ENCODE measurements at regions of chr19 and their contacts with region 1.

Region 1: DNA sequence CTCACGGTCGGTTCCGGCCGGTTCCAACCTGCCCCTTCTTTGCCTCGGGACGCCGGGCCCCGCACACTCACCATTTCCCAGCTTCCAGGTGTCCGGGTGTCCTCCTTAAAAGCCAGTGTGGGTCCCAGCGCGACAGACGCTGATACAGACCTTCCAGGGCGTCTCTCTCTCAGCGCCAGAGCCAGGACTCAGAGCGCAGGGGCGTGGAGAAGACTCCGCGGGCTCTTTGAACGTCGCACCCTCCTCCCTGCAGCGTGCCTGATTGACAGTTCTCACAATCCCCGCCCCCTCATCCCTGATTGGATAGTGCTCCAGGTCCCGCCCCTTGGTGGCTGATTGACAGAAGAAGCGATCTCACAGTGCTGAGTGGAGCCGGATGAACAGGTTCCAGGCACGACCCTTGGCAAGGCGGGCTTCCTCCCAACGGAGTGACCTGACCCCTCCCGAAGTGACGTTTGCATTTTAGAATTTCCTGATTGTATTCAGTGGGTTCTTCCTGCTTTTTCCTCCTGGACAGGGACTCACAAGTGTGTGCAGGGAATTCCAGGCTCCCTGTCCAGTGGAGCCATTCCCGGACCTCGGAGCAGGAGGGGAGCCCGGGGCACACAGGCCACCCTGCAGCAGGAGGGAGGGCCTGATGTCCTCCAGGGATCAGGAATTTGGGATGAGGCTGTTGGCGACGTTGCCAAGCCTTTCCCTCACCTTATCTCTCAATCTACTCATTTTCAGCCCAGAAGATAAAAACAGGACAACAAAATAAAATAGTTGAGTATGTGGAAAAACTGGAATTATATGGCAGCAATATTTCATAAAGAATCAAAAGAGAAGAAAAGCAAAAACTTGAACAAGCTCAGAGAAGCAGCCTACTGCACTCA is at the start of gene ZNF823:
- DNase-seq: peak; percentile 99
- H3K4me3 Mint-ChIP-seq: peak within 1 kb of the TSS; percentile 100
- H3K27ac Mint-ChIP-seq: peak within 1 kb of the TSS; percentile 90
- H3K4me1 Mint-ChIP-seq: peaks cover 6% of the 10 kb centered on the region
- H3K27me3 Mint-ChIP-seq: no peaks in the 10 kb centered on the region
- CTCF ChIP-seq: no peak
- total RNA-seq, gene ZNF823: 0.54 and 1.9 TPM in 2 replicates

Region 2: GRCh38 chr19:11685676-11686650 is 53.0 kb before region 1 on chr19:
- CTCF ChIA-PET with region 1: no interaction called
- POLR2A ChIA-PET with region 1: no interaction called
- intact Hi-C with region 1: no loop called
- DNase-seq: no peak
- H3K4me3 Mint-ChIP-seq: no peak overlapping the region
- H3K27ac Mint-ChIP-seq: no peak overlapping the region
- H3K4me1 Mint-ChIP-seq: no peaks in the 10 kb centered on the region
- H3K27me3 Mint-ChIP-seq: no peaks in the 10 kb centered on the region
- CTCF ChIP-seq: no peak

Region 3: DNA sequence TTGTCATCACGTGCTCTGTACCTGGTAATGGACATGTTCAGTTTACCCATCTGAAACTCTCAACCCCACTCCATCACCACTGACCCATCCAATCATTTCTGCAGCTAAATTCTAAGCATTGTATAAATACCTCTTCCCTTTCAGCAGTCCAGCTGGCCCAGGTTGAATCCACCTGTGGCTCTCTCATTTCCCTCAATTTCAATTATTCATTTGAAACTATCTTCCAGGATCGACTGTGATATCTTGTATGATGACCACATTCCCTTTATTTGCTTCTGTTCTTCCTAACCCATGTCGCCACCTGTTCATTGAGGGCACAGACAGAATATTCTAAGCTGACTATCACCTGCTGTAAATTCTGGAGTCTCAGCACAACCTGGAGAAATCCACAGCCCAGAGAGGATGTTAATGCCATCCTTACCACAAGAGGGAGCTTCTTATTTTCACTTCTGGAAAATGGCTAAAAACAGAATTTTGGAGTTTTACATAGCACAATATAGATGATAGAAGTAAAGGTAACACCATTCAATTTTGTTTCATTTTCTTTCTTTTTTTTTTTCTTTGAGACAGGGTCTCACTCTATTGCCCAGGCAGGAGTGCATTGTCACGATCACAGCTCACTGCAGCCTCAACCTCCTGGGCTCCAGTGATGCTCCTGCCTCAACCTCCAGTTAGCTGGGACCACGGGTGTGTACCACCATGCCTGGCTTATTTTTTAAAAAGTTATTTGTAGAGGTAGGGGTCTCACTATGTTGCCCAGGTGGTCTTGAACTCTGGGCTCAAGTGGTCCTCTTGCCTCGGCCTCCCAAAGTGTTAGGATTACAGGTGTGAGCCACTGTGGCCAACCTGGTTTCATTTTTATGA is 38.8 kb before region 1 on chr19:
- CTCF ChIA-PET with region 1: interaction called, 13 read pairs
- POLR2A ChIA-PET with region 1: interaction called, 5 read pairs
- intact Hi-C with region 1: no loop called
- DNase-seq: peak; percentile 45
- H3K4me3 Mint-ChIP-seq: no peak overlapping the region
- H3K27ac Mint-ChIP-seq: no peak overlapping the region
- H3K4me1 Mint-ChIP-seq: no peaks in the 10 kb centered on the region
- H3K27me3 Mint-ChIP-seq: no peaks in the 10 kb centered on the region
- CTCF ChIP-seq: peak; percentile 62

Region 4: DNA sequence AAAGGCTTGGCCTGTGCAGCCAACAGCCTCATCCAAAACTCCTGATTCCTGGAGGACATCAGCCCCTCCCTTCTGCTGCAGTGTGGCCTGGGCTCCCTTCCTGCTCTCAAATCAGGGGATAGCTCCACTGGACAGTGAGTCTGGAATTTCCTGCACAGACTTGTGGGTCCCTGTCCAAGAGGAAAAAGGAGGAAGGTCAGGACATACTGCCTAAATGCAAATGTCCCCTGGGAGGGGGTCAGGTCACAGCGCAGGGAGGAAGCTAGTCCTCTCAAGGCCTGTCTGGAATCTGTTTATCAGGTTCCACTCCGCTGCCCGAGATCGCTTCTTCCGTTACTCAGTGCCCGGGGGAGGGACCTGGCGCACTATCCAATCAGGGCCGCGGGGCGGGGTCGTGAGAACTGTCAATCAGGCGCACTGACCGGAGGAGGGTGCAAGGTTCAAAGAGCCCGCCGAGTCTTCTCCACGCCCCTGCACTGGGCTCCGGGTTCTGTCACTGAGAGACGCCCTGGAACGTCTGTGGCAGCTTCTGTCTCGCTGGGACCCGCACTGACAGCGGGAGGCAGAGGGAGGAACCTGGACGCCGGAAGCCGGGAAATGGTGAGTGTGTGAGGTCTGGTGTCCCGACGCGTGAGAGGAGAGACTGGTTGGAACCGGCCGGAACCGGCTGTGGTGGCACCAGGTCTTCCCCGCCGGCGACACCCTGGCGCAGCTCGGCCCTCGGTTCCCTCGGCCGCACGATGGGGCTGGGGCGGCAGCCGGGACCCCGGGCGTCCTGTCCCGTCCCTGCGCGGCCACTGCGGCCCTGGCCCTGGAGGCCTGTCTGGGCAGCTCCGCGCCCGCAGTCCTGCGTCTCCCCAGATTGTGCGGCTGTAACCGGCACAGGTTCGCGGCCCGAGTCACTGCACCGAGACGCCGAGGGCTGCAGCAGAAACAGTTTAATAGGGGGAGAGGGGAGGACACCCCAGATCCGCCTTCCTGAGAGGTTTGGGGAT is 27.9 kb after region 1 on chr19 and contains the start of gene ZNF441:
- CTCF ChIA-PET with region 1: no interaction called
- POLR2A ChIA-PET with region 1: interaction called, 48 read pairs
- intact Hi-C with region 1: loop called (anchors 1 kb)
- DNase-seq: peak; percentile 95
- H3K4me3 Mint-ChIP-seq: peak within 1 kb of the TSS; percentile 99
- H3K27ac Mint-ChIP-seq: peak within 1 kb of the TSS; percentile 96
- H3K4me1 Mint-ChIP-seq: peaks cover 10% of the 10 kb centered on the region
- H3K27me3 Mint-ChIP-seq: no peaks in the 10 kb centered on the region
- CTCF ChIP-seq: no peak
- total RNA-seq, gene ZNF441: 3.4 and 4.2 TPM in 2 replicates

Region 5: DNA sequence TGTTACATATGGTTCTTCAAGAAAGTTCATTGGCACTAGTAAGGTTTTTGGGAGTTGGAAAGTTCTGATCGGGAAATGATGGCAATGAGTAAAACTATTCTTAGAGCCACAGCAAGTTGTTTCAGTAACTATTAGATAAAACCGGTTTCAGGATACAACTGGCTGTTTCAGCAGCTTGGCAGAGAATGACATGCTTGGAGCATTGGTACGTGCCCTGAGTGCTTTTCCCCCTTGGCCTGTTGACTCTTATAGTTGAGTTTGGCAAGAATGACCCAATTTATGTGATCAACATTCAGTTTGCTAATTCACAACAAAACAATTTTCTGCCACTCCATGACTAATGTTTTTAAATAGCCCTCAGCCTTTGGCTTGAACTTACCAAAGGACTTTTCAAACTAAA is 48.6 kb after region 1 on chr19:
- CTCF ChIA-PET with region 1: no interaction called
- POLR2A ChIA-PET with region 1: no interaction called
- intact Hi-C with region 1: no loop called
- DNase-seq: no peak
- H3K4me3 Mint-ChIP-seq: no peak overlapping the region
- H3K27ac Mint-ChIP-seq: no peak overlapping the region
- H3K4me1 Mint-ChIP-seq: no peaks in the 10 kb centered on the region
- H3K27me3 Mint-ChIP-seq: no peaks in the 10 kb centered on the region
- CTCF ChIP-seq: no peak